Gastrocnemius medialis (tissue), 4 donors: ENCODE measurements at regions of chr2 and their contacts with region 1.

Region 1: DNA sequence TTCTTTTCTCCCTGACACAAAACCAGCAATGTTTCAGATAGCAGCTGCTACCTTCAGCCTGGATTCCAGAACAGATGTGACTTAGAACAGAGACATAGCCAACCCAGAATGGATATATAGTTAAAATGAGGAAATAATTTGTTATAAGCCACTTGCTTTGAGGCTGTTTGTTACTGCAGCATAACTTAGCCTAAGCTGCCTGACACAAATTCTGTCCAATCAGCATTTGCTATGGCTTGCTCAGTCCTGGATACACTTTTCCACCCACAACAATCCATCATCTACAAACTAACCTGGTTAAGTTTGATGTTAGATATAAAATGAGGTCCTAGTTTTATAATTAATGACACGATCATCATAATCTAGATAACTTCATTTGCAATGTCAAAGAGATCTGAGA is 480.4 kb downstream of the NR4A2 start:
- DNase-seq: no peak
- ATAC-seq: no peak
- H3K4me3 ChIP-seq: no peak overlapping the region
- H3K27ac ChIP-seq: no peak overlapping the region
- H3K4me1 ChIP-seq: no peaks in the 10 kb centered on the region
- H3K27me3 ChIP-seq: no peaks in the 10 kb centered on the region
- CTCF ChIP-seq: no peak
- POLR2A ChIP-seq: no peak

Region 2: DNA sequence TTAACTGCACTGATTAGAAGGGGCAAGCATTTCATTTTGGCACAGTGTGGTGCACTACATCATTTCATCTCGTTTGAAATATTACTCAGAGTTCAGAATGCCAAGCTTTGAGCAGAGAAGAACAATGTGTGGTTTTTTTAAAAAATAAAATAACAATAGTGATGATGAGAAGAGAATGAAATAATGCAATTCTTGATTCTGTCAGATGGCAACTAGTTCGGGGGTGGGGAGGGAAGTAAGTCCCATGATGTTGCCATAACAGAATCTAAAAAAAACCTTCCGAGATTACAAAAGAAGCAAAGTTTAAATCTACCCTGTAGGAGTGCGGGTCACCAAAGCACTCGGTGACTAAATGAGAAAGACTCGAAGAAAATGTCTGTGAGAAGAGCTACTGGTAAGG is 10.1 kb before region 1 on chr2:
- in situ Hi-C with region 1: no loop called
- intact Hi-C with region 1: loop called (anchors 1 kb)
- DNase-seq: no peak
- ATAC-seq: no peak
- H3K4me3 ChIP-seq: no peak overlapping the region
- H3K27ac ChIP-seq: no peak overlapping the region
- H3K4me1 ChIP-seq: no peaks in the 10 kb centered on the region
- H3K27me3 ChIP-seq: no peaks in the 10 kb centered on the region
- CTCF ChIP-seq: no peak
- POLR2A ChIP-seq: no peak

Region 3: DNA sequence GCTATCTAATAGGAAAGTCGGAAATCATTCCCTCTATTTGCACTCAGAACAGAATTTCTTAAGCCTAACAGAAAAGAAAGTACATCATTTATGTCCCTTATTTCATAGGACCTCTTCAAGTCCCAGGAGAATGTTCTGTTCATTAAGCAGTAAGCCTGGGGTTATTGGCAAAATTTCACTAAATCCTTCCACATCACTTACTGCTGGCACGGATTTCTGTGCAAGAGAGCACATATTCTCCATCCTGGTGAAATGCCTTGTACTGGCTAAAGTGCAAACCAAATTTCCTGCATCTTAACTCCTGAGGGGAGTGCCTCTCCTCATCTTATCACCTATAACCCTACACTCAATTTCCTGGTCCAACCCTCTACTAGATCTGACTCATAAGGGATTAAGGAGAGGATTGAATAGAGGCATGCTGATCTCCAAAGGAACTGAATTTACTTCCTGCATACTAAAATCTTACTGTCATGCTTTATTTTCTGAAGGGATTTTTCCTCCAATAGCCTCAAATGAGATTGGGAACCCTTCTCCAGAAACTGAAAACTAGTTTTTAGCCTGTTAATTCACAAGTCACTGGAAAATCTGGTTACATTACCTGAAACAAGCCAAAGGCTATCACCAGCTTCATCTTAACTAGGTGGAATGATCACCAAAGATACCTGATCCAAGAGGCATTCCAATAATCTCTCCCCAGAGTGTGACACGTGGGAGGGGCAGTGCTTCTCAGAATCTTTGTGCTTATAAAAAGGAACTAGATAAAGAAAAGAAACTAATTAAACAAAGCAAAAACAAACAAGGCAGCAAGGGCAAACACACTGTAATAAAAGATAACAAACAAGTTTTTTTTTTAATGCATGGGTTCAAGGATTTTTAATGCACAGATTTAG is 169.2 kb after region 1 on chr2:
- in situ Hi-C with region 1: no loop called
- intact Hi-C with region 1: no loop called
- DNase-seq: no peak
- ATAC-seq: no peak
- H3K4me3 ChIP-seq: no peak overlapping the region
- H3K27ac ChIP-seq: no peak overlapping the region
- H3K4me1 ChIP-seq: no peaks in the 10 kb centered on the region
- H3K27me3 ChIP-seq: no peaks in the 10 kb centered on the region
- CTCF ChIP-seq: no peak
- POLR2A ChIP-seq: no peak